ENCODE measurements at regions of chr19 and their contacts with region 1.

Region 1: DNA sequence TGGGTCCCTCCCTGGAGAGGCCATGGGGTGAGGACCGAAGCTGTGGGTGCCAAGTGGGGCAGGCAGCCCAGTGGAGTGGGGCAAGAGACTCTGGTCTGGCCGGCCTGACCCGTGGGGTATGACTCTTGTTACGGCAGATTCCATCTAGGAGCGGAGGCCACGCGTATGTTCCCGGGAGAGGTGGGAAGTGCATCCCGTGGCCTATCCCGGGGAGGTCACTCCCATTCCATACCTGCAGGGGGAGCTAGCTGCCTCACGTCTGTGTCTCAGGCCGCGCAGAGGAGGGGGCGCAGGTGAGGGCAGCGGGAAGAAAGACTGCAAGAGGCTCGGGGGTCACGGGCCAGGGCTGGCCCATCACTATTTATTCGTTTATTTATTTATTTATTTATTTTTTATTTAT is 4.9 kb downstream of the CSNK1G2 start:
- DNase-seq: peak in 1 of 3 donors; percentile 58
- ATAC-seq: peak in 2 of 4 donors; percentile 4 to 43
- H3K4me3 ChIP-seq: no peak overlapping the region
- H3K27ac ChIP-seq: no peak overlapping the region
- H3K4me1 ChIP-seq: no peaks in the 10 kb centered on the region
- H3K27me3 ChIP-seq: no peaks in the 10 kb centered on the region
- CTCF ChIP-seq: peak; percentile 32 to 51 (median 42)
- POLR2A ChIP-seq: no peak

Region 2: DNA sequence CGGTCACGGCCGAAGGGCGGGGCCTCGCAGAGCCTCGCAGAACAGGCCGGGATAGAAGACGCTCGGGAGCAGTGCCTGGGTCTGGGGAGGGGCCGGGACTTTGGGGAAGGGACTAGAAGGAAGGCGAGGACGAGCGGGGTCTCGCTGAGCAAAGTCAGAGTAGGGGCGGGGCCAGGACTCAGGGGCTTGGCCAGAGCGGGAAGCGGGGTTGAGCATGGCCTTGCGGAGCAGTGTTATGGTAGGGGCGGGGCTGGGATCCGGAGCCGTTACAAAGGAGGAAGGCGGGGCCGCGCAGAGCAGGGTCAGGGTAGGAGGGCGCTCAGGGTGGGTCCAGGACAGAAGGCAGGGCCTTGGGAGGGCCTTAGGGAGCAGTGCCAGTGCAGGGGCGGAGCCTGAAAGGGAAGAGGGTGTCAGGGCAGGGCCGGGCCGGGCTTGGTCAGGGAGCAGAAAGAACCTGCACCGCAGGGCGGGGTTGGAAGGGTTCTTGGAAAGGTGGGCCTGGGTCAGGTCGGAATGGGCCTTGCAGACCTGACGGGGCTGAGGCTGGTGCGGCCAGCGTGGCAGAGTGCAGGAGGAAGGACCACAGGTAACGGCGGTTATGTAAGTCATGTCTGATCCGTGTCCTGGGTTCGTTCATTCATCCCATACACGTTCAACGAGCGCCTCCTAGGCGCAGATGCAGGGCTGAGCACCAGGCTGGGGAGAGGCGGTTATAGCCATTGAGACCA is 133.3 kb before region 1 on chr19:
- intact Hi-C with region 1: no loop called
- DNase-seq: peak; percentile 98
- ATAC-seq: peak; percentile 86 to 92 (median 88)
- H3K4me3 ChIP-seq: peak overlapping the region; percentile 35 to 54 (median 42)
- H3K27ac ChIP-seq: peak overlapping the region in 2 of 3 donors; percentile 18 to 43
- H3K4me1 ChIP-seq: peaks cover 0 to 6% (median 0%) of the 10 kb centered on the region in 4 donors
- H3K27me3 ChIP-seq: no peaks in the 10 kb centered on the region
- CTCF ChIP-seq: peak; percentile 47 to 65 (median 50)
- POLR2A ChIP-seq: peak; percentile 44

Region 3: DNA sequence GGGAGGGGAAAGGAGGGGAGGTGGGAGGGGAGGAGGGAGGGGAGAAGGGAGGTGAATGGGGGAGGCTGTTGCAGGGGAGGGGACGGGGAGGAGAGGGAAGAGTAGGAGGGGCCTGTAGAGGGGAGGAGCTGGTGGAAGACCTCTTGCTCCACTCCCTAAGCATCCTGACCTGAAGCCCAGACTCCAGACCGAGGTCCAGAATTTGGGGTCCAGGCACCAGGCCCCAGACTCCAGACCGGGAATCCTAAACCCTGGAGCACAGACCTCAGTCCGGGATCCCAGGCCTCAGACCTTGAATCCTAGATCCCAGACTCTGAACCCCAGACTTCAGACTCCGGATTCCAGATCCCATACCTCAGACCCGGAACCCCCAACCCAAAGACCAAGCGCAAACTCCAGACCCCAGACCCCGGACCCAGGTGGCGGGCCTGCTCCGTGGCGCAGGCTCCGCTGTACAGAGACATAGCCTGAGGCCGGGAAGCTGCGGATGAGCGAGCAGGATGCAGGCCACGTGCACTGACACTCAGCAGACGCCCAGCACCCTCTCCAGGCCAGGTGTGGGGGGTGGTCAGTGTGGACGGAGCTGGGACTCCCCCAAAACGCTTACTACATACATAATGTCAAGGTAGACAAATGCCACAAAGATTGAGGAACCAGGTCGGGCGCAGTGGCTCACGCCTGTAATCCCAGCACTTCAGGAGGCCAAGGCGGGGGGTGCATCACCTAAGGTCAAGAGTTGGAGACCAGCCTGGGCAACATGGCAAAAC is 70.3 kb after region 1 on chr19:
- intact Hi-C with region 1: loop called in 1 of 2 experiments (anchors 5 kb)
- DNase-seq: peak; percentile 72 to 83 (median 80)
- ATAC-seq: peak; percentile 88 to 90 (median 89)
- H3K4me3 ChIP-seq: no peak overlapping the region
- H3K27ac ChIP-seq: no peak overlapping the region
- H3K4me1 ChIP-seq: peaks cover 0 to 3% (median 0%) of the 10 kb centered on the region in 4 donors
- H3K27me3 ChIP-seq: no peaks in the 10 kb centered on the region
- CTCF ChIP-seq: no peak
- POLR2A ChIP-seq: no peak

Region 4: GRCh38 chr19:2253106-2254053 is 307.5 kb after region 1 on chr19:
- intact Hi-C with region 1: no loop called
- DNase-seq: no peak
- ATAC-seq: peak in 2 of 4 donors; percentile 7 to 18
- H3K4me3 ChIP-seq: no peak overlapping the region
- H3K27ac ChIP-seq: no peak overlapping the region
- H3K4me1 ChIP-seq: peaks cover 0 to 27% (median 0%) of the 10 kb centered on the region in 4 donors
- H3K27me3 ChIP-seq: peaks cover 7 to 16% of the 10 kb centered on the region in 2 donors
- CTCF ChIP-seq: peak in 2 of 4 donors; percentile 8 to 9
- POLR2A ChIP-seq: no peak